H1 (cell line): ENCODE measurements at regions of chr5 and their contacts with region 1.

Region 1: GRCh38 chr5:91383027-91383955 is at the start of gene ARRDC3:
- DNase-seq: peak; percentile 90 to 97
- H3K4me3 ChIP-seq: peak within 1 kb of the TSS; percentile 85 to 94 (median 90)
- H3K27ac ChIP-seq: peak within 1 kb of the TSS; percentile 93
- H3K4me1 ChIP-seq: no peaks in the 10 kb centered on the region; a peak in 2 of 7 replicates
- H3K27me3 ChIP-seq: no peaks in the 10 kb centered on the region
- CTCF ChIP-seq: 0 out of 4 replicates have a peak, but pooled peaks of 1 of the 3 experiments have one; percentile 9
- EP300 ChIP-seq: peak in 1 of 2 experiments; percentile 3; a peak in 1 of 3 replicates
- POLR2A ChIP-seq: peak; percentile 92 to 98
- RAD21 ChIP-seq: peak in 1 of 2 experiments; percentile 15; a peak in 1 of 4 replicates
- total RNA-seq, gene ARRDC3: 5.4 and 5.7 TPM in 2 replicates

Region 2: DNA sequence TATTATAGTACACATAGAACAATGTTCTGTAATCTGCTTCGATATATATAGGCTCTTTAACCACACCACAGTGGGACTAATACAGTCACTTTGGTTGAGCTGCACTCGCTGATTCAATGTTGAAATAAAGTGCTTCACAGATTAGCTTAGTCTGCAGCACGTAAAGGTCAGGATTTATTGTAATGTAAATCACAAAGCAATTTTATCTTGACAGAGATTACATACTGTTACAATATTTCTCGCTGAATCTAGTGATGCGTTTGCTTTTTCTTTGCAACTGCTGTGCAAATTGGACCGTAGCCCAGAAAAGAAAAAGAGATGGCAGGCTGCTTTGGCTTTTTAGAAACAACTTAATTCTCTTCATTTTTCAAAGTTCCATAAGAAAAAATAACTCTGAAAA is 1026.7 kb before region 1 on chr5:
- CTCF ChIA-PET with region 1: no interaction called
- POLR2A ChIA-PET with region 1: no interaction called
- DNase-seq: no peak
- H3K4me3 ChIP-seq: no peak overlapping the region
- H3K27ac ChIP-seq: no peak overlapping the region
- H3K4me1 ChIP-seq: peaks cover 0 to 2% (median under 1%) of the 10 kb centered on the region in 4 experiments; a peak in 1 of 7 replicates
- H3K27me3 ChIP-seq: no peaks in the 10 kb centered on the region
- CTCF ChIP-seq: no peak
- EP300 ChIP-seq: no peak
- POLR2A ChIP-seq: no peak
- RAD21 ChIP-seq: no peak

Region 3: GRCh38 chr5:91101600-91102379 is 281.5 kb before region 1 on chr5:
- CTCF ChIA-PET with region 1: interaction called, 17 read pairs
- POLR2A ChIA-PET with region 1: interaction called, 6 read pairs
- DNase-seq: peak; percentile 53 to 64
- H3K4me3 ChIP-seq: no peak overlapping the region
- H3K27ac ChIP-seq: no peak overlapping the region
- H3K4me1 ChIP-seq: peaks cover 0 to 14% (median 4%) of the 10 kb centered on the region in 4 experiments; a peak in 6 of 7 replicates
- H3K27me3 ChIP-seq: no peaks in the 10 kb centered on the region
- CTCF ChIP-seq: peak; percentile 44 to 78 (median 69)
- EP300 ChIP-seq: no peak
- POLR2A ChIP-seq: no peak
- RAD21 ChIP-seq: peak; percentile 87 to 89

Region 4: DNA sequence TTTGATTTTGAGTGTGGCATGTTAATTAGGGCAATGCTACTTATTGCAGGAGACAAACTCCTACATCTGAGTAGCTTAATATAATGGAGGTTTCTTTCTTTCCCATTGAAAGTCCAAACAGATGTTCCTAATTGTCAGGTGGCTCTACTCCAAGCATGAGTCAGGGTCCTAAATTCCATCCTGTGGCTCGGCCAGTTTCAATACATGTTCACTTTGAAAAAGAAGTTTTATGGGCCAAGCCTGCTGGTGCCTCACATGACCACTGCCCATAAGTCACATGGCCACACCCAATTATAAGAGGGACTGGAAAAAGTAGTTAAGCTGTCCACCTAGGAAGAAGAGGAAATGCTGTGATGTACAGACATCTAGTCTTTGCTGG is 170.6 kb before region 1 on chr5:
- CTCF ChIA-PET with region 1: interaction called, 20 read pairs
- POLR2A ChIA-PET with region 1: interaction called, 7 read pairs
- DNase-seq: no peak
- H3K4me3 ChIP-seq: no peak overlapping the region
- H3K27ac ChIP-seq: no peak overlapping the region
- H3K4me1 ChIP-seq: no peaks in the 10 kb centered on the region
- H3K27me3 ChIP-seq: no peaks in the 10 kb centered on the region
- CTCF ChIP-seq: no peak
- EP300 ChIP-seq: no peak
- POLR2A ChIP-seq: no peak
- RAD21 ChIP-seq: no peak

Region 5: DNA sequence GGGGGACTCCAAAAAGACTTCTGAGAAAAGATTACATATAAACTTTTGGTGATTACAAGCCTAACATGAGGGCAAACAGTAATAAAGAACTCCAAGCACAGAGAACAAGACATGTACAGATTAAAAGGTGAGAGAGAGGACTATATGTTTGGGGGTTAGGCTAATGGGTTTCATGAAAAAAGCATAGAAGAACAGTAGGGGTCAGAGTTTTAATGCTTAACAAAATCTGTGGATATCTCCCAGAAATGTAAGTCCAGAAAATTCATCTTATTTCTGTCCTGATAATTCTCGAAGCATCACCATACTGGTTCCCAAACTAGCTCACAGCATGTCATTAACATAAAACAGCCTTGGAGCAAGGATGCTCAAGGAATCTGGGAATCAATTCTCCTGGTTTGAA is 137.4 kb before region 1 on chr5:
- CTCF ChIA-PET with region 1: interaction called, 12 read pairs
- POLR2A ChIA-PET with region 1: interaction called, 4 read pairs
- DNase-seq: no peak
- H3K4me3 ChIP-seq: no peak overlapping the region
- H3K27ac ChIP-seq: no peak overlapping the region
- H3K4me1 ChIP-seq: no peaks in the 10 kb centered on the region
- H3K27me3 ChIP-seq: no peaks in the 10 kb centered on the region
- CTCF ChIP-seq: no peak
- EP300 ChIP-seq: no peak
- POLR2A ChIP-seq: no peak
- RAD21 ChIP-seq: no peak

Region 6: GRCh38 chr5:91341154-91341553 is 42.1 kb before region 1 on chr5:
- CTCF ChIA-PET with region 1: interaction called, 10 read pairs
- POLR2A ChIA-PET with region 1: interaction called, 8 read pairs
- DNase-seq: no peak
- H3K4me3 ChIP-seq: no peak overlapping the region
- H3K27ac ChIP-seq: no peak overlapping the region
- H3K4me1 ChIP-seq: peaks cover 0 to 7% (median 3%) of the 10 kb centered on the region in 4 experiments; a peak in 4 of 7 replicates
- H3K27me3 ChIP-seq: no peaks in the 10 kb centered on the region
- CTCF ChIP-seq: no peak
- EP300 ChIP-seq: no peak
- POLR2A ChIP-seq: no peak
- RAD21 ChIP-seq: no peak

Region 7: DNA sequence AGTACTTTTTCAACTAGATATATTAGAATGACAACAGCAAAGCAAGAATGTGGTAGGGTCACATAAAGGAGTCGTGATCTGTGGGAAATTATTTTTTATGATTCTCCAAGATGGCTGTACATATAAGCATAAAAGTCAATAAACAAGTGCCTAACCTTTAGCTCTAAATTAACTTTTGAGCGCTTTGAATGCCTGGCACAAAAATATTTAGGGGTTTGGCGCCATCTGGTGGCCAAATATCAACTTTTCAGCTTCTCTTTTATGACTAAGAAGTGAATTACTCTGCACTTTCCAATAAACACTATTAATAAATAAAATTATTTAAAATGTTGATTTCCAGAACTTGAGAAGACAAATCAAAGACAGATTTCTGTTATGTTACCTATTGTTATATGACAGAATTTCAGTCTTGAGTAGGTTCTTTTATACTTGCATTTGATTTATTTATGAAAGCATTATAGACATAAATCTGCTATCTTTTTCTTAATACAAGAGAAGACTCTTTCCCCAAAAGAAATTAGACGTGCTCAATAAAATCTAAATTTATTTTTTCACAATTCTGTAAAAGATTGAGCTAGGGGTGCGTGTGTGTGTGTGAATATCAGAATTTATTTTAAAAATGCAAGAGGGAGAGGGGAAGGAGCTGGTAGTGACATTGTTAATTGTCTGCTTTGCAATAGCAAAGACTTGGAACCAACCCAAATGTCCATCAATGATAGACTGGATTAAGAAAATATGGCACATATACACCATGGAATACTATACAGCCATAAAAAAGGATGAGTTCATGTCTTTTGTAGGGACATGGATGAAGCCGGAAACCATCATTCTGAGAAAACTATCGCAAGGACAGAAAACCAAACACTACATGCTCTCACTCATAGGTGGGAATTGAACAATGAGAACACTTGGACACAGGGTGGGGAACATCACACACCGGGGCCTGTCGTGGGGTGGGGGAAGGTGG is 36.6 kb after region 1 on chr5:
- CTCF ChIA-PET with region 1: interaction called, 112 read pairs
- POLR2A ChIA-PET with region 1: interaction called, 31 read pairs
- DNase-seq: peak in 1 of 2 experiments; percentile 71
- H3K4me3 ChIP-seq: no peak overlapping the region
- H3K27ac ChIP-seq: no peak overlapping the region
- H3K4me1 ChIP-seq: peaks cover 0 to 3% (median under 1%) of the 10 kb centered on the region in 4 experiments; a peak in 3 of 7 replicates
- H3K27me3 ChIP-seq: no peaks in the 10 kb centered on the region
- CTCF ChIP-seq: peak in 2 of 3 experiments; percentile 42 to 50; a peak in 3 of 4 replicates
- EP300 ChIP-seq: no peak
- POLR2A ChIP-seq: no peak
- RAD21 ChIP-seq: peak; percentile 68 to 79